ENCODE measurements at regions of chr18 and their contacts with region 1.

Region 1: GRCh38 chr18:43627848-43628526 is 350.7 kb upstream of the SYT4 start:
- DNase-seq: no peak
- ATAC-seq: no peak
- H3K4me3 ChIP-seq: no peak overlapping the region
- H3K27ac ChIP-seq: no peak overlapping the region
- H3K4me1 ChIP-seq: no peaks in the 10 kb centered on the region
- H3K27me3 ChIP-seq: no peaks in the 10 kb centered on the region
- CTCF ChIP-seq: no peak
- EP300 ChIP-seq: no peak
- POLR2A ChIP-seq: no peak
- RAD21 ChIP-seq: no peak

Region 2: GRCh38 chr18:45212181-45213039 is 1584.4 kb after region 1 on chr18:
- CTCF ChIA-PET with region 1: no interaction called
- POLR2A ChIA-PET with region 1: no interaction called
- in situ Hi-C with region 1: loop called (anchors 25 kb)
- intact Hi-C with region 1: no loop called
- DNase-seq: peak; percentile 59
- ATAC-seq: peak; percentile 100
- H3K4me3 ChIP-seq: no peak overlapping the region
- H3K27ac ChIP-seq: no peak overlapping the region
- H3K4me1 ChIP-seq: no peaks in the 10 kb centered on the region
- H3K27me3 ChIP-seq: no peaks in the 10 kb centered on the region; a peak in 1 of 5 replicates
- CTCF ChIP-seq: peak; percentile 90
- EP300 ChIP-seq: no peak
- POLR2A ChIP-seq: no peak
- RAD21 ChIP-seq: peak; percentile 68

Measured in HepG2 (cell line).